Right ventricle myocardium superior (tissue), 1 donor: ENCODE measurements at regions of chrX and their contacts with region 1.

Region 1: GRCh38 chrX:119729408-119730201 is 28.8 kb upstream of the SOWAHD start:
- DNase-seq: peak; percentile 54
- ATAC-seq: peak; percentile 46

Region 2: GRCh38 chrX:119516157-119516702 is 213.4 kb before region 1 on chrX:
- intact Hi-C with region 1: loop called (anchors 10 kb)
- DNase-seq: no peak
- ATAC-seq: peak; percentile 82

Region 3: DNA sequence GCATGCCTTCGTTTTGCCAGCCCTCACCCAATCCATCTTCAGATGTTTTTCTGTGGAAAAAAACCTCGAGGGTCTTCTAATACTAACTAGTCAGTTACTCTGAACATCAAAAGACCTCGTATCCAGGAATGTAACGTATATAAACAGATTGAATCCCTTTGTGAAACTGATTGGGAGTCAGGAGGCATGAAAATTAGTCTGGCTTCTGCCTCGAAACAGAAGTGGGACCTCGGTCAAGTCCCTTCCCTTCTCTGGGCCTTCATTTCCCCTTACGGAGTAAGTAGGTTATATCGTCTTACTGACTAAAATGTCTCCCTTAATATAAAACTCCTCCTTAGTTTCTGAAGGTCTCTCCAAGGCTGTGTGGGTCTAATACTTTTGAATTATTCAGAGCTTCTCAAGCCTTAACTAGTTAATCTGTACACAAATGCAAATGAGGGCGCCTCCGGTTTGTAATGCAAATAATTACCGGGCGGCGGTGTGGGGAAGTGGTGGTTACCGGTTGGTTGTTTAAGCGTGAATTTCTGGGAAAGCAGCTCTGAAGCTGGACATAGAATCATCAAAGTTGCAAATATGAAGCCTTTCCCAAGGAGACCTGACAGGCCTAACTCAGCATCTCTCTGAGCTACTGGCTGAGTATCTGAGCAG is 112.0 kb before region 1 on chrX:
- intact Hi-C with region 1: loop called (anchors 10 kb)
- DNase-seq: no peak
- ATAC-seq: no peak

Region 4: DNA sequence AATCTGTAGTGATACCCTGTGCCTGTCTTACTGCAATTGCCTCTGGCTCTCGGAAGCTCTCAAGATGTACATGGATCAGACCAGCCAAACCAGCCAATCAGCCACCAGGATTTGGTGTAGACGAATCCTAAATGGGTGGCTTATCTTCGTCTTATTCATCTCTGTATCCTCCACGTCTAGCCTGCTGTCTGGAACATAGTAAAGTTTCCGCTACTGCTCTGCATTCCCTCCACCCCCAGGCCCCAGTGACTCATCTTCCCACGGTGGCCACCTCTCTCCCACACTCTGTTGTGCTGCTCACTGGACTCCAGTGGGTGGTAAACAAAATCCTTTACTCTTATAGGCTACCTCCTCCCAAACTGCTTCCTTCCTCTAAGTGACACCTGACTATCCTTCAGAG is 74.5 kb before region 1 on chrX:
- intact Hi-C with region 1: no loop called
- DNase-seq: no peak
- ATAC-seq: peak; percentile 36